ENCODE measurements at regions of chr17 and their contacts with region 1.

Region 1: GRCh38 chr17:1648963-1649843 is 463 bp downstream of the RILP start:
- DNase-seq: peak; percentile 93 to 98 (median 96)
- H3K4me3 ChIP-seq: peak overlapping the region; percentile 53 to 80 (median 63)
- H3K4me3 Mint-ChIP-seq: peak overlapping the region; percentile 82 to 88
- H3K27ac ChIP-seq: peak overlapping the region; percentile 76 to 90
- H3K27ac Mint-ChIP-seq: peak overlapping the region in 5 of 7 donors; percentile 45 to 88 (median 74)
- H3K4me1 ChIP-seq: peaks cover 49 to 60% of the 10 kb centered on the region in 2 donors
- H3K4me1 Mint-ChIP-seq: peaks cover 50% of the 10 kb centered on the region
- H3K27me3 ChIP-seq: no peaks in the 10 kb centered on the region
- H3K27me3 Mint-ChIP-seq: peaks cover 0 to 17% (median 3%) of the 10 kb centered on the region in 3 donors
- CTCF ChIP-seq: peak; percentile 91

Region 2: DNA sequence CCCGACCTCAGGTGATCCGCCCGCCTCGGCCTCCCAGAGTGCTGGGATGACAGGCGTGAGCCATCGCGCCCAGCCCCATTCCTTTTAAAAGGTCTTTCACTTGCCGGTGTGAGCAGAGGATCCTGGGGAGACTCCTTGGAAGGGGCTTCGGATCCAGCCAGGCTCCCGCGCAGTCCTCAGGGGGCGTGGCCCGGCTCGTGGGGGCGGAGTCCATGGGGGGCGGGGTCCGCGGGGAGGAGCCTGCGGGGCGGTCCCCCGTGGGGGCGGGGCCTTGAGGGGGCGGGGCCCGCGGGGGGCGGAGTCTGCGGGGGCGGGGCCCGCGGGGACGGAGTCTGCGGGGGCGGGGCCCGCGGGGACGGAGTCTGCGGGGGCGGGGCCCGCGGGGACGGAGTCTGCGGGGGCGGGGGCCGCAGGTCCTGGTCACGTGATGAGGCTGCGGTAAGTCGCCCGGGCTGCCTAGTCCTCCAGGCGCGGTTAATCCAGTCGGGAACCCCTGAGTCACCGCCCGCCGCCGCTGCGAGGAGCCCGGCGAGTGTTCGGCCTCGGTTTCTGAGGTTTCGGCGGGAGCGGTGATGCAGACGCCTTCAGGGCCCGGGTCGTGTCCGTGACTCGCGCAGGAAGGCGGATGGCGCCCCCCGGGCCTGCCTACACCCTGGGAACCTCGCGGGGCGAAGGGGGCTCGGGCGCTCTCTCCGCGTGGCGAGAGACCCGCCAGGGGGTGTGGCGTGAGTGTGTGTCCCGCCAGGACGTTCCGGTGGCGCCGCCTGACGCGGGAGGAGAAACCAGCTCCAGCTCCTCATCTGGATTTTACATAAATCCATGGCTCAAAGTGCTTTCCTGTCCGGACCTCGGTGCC is 445.9 kb before region 1 on chr17:
- intact Hi-C with region 1: loop called in 1 of 2 experiments (anchors 10 kb)
- DNase-seq: peak; percentile 81 to 94 (median 89)
- H3K4me3 ChIP-seq: peak overlapping the region; percentile 45 to 79 (median 48)
- H3K4me3 Mint-ChIP-seq: peak overlapping the region; percentile 77 to 84
- H3K27ac ChIP-seq: peak overlapping the region; percentile 43 to 81
- H3K27ac Mint-ChIP-seq: peak overlapping the region in 6 of 7 donors; percentile 53 to 85 (median 70)
- H3K4me1 ChIP-seq: peaks cover 78 to 97% of the 10 kb centered on the region in 2 donors
- H3K4me1 Mint-ChIP-seq: peaks cover 83% of the 10 kb centered on the region
- H3K27me3 ChIP-seq: no peaks in the 10 kb centered on the region
- H3K27me3 Mint-ChIP-seq: peaks cover 0 to 1% (median 0%) of the 10 kb centered on the region in 3 donors
- CTCF ChIP-seq: no peak

Region 3: GRCh38 chr17:1573916-1574696 is 75.1 kb before region 1 on chr17:
- intact Hi-C with region 1: loop called in 1 of 2 experiments (anchors 5 kb)
- DNase-seq: peak; percentile 83 to 85 (median 85)
- H3K4me3 ChIP-seq: no peak overlapping the region
- H3K4me3 Mint-ChIP-seq: no peak overlapping the region
- H3K27ac ChIP-seq: peak overlapping the region; percentile 1 to 99
- H3K27ac Mint-ChIP-seq: peak overlapping the region; percentile 46 to 100 (median 85)
- H3K4me1 ChIP-seq: peaks cover 62 to 69% of the 10 kb centered on the region in 2 donors
- H3K4me1 Mint-ChIP-seq: peaks cover 56% of the 10 kb centered on the region
- H3K27me3 ChIP-seq: no peaks in the 10 kb centered on the region
- H3K27me3 Mint-ChIP-seq: peaks cover 0 to 9% (median 0%) of the 10 kb centered on the region in 3 donors
- CTCF ChIP-seq: peak; percentile 97

Region 4: DNA sequence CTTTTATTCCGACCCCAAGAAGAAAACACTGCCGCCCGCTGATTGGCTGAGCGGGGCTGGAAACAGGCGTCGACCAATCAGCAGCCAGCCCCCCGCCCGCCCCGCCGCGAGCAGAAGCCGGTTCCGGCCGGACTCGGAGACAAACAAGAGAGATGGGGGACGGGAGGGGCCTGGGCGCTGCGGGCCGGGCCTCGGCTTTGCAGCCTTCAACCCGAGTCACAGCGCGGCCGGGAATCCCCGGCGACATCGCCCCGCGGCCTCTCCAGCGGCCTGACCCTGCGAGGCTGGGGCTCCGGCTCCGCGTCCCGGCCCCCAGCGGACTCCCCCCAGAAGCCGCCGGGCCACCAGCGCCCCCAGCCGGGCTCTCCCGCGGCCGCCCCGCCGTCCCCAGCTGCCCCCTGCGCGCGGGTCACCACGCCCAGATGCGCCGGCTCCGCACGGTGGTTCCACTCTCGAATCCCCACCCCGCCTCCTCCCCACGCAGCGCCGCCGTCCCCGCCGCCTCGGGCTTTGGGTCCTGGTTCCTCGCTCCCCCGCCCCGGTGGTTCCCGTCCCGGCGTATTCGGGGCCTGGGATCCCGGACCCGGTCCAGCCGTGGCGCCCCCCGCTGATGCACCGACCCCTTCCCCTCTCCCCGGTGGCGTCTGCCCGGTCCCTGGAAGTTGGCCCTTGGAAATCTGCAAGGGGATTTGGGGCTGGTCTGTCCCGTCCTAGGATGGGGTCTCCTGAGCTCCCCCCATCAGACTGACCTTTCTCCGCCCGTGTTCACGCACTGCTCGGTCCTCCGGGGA is 20.2 kb before region 1 on chr17:
- intact Hi-C with region 1: loop called in 1 of 2 experiments (anchors 2 kb)
- DNase-seq: peak; percentile 89 to 95 (median 92)
- H3K4me3 ChIP-seq: peak overlapping the region; percentile 95 to 100 (median 99)
- H3K4me3 Mint-ChIP-seq: peak overlapping the region; percentile 92 to 95
- H3K27ac ChIP-seq: peak overlapping the region; percentile 95
- H3K27ac Mint-ChIP-seq: peak overlapping the region; percentile 91 to 97 (median 94)
- H3K4me1 ChIP-seq: peaks cover 58 to 71% of the 10 kb centered on the region in 2 donors
- H3K4me1 Mint-ChIP-seq: peaks cover 52% of the 10 kb centered on the region
- H3K27me3 ChIP-seq: no peaks in the 10 kb centered on the region
- H3K27me3 Mint-ChIP-seq: peaks cover 0 to 17% (median 1%) of the 10 kb centered on the region in 3 donors
- CTCF ChIP-seq: no peak

Region 5: DNA sequence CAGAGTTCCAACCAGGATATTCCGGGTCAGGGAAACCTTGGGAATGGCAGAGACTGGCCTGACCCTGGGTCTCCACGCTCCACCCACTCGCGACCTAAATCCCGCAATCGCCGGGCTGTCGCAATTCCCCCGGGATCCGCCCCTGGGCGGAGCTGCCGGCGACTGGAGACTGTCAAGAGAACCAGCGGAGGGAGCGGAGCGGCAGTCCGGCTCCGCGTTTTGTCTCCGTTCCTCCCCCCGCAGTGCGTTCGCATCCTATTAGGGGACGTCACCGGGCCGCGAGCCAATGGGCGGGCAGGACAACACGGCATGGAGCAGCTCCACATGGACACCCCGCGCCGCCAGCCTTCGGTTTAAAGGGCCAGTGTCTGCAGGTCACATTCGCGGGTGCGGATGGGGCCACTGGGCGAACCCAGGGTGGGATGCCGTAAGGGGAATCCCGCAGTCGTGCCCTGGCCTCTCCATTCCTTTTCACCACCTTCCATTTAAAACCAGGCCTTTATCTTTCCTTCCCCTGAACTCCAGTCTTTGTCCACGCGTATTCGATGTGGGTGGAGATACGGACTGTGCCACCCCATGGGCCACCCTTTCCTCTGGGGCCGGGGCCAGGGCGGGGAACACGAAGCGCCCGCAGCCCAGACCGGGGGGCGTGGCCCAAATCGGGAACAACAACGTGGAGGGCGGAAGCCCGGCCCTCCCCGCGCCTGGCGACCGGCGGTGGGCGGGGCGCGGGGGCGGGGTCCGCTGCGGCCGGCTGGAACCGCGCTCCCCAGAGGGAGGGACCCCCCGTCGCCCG is 752.4 kb after region 1 on chr17:
- intact Hi-C with region 1: loop called in 1 of 2 experiments (anchors 10 kb)
- DNase-seq: peak; percentile 98 to 99 (median 99)
- H3K4me3 ChIP-seq: peak overlapping the region; percentile 37 to 98 (median 55)
- H3K4me3 Mint-ChIP-seq: peak overlapping the region; percentile 90 to 99
- H3K27ac ChIP-seq: peak overlapping the region; percentile 96 to 100
- H3K27ac Mint-ChIP-seq: peak overlapping the region; percentile 98 to 100 (median 100)
- H3K4me1 ChIP-seq: peaks cover 64 to 73% of the 10 kb centered on the region in 2 donors
- H3K4me1 Mint-ChIP-seq: peaks cover 65% of the 10 kb centered on the region
- H3K27me3 ChIP-seq: no peaks in the 10 kb centered on the region
- H3K27me3 Mint-ChIP-seq: peaks cover 0 to 7% (median 0%) of the 10 kb centered on the region in 3 donors
- CTCF ChIP-seq: no peak

Measured in CD14-positive monocyte (primary cell).